ENCODE measurements at regions of chr11 and their contacts with region 1.

Region 1: DNA sequence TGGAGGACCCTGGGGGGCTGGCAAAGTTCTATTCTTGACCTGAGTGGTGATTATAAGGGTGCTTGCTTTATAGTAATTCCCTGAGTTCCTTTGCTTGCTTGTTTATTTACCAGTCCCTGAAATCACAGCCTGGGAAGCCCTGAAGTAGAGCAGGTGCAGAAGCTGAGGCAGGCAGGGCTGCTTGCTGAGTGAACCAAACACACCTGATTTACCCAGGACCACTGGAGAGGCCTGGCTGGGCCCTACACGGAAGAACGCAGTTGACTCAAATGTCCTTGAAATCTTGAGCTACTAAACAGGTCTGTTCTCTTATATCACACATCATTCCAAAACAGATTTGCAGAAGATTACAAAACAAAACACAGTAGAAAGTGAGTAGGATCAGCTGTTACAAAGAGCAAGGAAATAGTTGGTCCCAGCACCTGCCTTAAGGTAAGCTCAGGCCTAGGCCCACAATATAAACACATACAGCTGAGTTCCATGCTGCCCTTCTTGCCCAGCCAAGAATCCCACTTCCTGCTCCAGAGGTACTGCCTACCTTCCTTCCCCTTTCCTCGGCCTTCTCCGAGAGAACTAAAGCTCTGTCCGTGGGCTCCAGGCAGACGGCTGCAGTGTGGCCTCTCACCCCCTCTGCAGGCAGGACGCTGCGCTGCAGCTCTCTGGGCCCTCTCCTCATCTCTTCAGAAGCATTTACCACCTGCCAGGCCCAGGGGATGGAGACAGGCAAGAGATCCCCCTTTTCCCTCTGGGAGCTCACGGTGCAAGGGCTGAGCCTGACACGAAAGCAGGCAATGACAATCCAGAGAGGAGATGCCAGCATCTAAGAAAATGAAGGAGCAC is 46.1 kb upstream of the SCUBE2 start:
- DNase-seq: peak; percentile 69 to 92 (median 84)
- H3K4me3 ChIP-seq: no peak overlapping the region
- H3K27ac ChIP-seq: peak overlapping the region in 4 of 5 donors; percentile 56 to 80 (median 66)
- H3K4me1 ChIP-seq: peaks cover 0 to 34% of the 10 kb centered on the region in 2 donors
- H3K27me3 ChIP-seq: no peaks in the 10 kb centered on the region
- CTCF ChIP-seq: peak; percentile 92 to 96 (median 94)
- POLR2A ChIP-seq: no peak

Region 2: DNA sequence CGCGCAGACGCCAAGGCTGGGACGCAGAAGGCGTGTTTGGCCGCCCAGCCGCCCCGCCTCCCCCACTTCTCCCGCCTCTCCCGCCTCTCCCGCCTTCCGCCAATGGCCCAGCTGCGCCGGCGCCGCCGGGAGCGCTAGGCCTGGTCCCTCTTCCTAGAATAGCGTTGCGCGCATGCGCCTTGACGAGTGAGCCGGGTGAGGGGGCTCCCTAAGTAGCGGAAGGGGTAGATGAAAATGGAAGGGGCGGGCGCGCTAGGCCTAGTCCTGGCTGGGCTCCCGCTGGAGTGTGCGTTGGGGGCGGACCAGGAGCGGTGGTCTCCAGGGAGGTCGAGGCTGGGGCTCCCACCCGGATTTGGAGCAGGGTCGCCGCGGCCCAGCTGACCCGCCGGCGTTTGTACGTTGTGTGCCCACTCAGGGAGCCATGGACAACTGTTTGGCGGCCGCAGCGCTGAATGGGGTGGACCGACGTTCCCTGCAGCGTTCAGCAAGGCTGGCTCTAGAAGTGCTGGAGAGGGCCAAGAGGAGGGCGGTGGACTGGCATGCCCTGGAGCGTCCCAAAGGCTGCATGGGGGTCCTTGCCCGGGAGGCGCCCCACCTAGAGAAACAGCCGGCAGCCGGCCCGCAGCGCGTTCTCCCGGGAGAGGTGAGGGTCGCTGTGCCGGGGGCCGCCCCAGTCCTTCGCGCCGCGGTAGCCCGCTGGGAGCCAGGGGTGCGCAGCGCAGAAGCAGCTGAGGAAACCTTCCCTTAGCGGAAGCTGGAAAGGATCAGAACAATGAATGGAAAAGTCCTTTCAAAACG is 226.3 kb before region 1 on chr11 and contains the start of gene AKIP1:
- intact Hi-C with region 1: loop called in 1 of 2 experiments (anchors 5 kb)
- DNase-seq: peak; percentile 93 to 97 (median 96)
- H3K4me3 ChIP-seq: peak within 1 kb of the TSS; percentile 74 to 98 (median 86)
- H3K27ac ChIP-seq: peak within 1 kb of the TSS; percentile 80 to 95 (median 91)
- H3K4me1 ChIP-seq: peaks cover 0 to 31% of the 10 kb centered on the region in 2 donors
- H3K27me3 ChIP-seq: no peaks in the 10 kb centered on the region
- CTCF ChIP-seq: no peak
- POLR2A ChIP-seq: peak; percentile 29 to 68
- total RNA-seq, gene AKIP1: 25.1 to 52.9 (median 44.5) TPM

Region 3: GRCh38 chr11:9015677-9016076 is 121.8 kb before region 1 on chr11:
- intact Hi-C with region 1: loop called (anchors 5 kb)
- DNase-seq: peak; percentile 84 to 93 (median 90)
- H3K4me3 ChIP-seq: no peak overlapping the region
- H3K27ac ChIP-seq: no peak overlapping the region
- H3K4me1 ChIP-seq: peaks cover 4 to 12% of the 10 kb centered on the region in 2 donors
- H3K27me3 ChIP-seq: no peaks in the 10 kb centered on the region
- CTCF ChIP-seq: peak; percentile 76 to 86 (median 84)
- POLR2A ChIP-seq: no peak

Region 4: DNA sequence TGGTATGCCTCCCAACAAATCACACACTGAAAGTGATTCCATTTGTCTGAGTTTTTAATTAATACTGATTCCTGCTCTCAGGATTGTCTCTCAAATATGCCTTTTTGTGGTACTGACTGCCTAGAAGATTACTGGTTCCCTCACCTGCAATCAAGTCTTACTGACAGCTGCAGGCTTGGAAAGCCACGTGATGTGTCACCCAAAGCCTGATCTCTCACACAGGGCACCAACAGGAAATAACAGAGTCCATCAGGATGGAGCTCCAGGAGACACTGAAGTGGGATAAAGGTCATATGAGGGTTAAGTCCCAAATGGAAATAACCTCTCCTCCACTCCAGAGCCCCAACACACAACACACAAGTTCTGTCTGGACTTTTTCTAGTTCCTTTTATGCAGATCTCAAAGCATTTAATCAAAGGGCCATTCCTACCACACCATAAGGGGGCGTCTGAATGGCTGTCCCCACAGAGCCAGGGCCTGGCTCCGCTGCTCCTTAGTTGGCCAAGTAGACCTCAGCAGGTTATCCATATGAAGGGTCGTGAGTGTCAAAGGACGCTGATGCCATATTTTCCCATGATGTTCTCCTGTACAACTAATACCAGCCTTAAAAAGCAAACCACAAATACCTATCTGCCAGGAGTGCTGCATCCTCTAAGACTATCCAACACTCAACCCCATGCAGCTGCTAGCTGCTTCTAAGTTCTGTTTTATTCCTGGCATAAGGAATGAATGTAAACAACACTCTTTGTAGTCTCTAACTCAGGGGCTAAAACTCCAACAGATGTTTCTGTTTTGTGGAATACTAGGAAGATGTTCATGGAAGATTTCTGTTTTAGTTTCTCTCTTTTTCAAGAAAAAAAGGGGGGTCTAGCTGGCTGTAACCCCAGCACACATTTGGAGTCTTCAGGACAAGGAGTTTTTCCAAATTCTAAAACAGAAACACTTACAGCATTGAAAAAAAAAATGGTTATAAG is 59.1 kb before region 1 on chr11:
- intact Hi-C with region 1: no loop called
- DNase-seq: no peak
- H3K4me3 ChIP-seq: no peak overlapping the region
- H3K27ac ChIP-seq: no peak overlapping the region
- H3K4me1 ChIP-seq: no peaks in the 10 kb centered on the region
- H3K27me3 ChIP-seq: no peaks in the 10 kb centered on the region
- CTCF ChIP-seq: no peak
- POLR2A ChIP-seq: no peak

Measured in adrenal gland (tissue), 19 donors.